CD8-positive, alpha-beta T cell (primary cell): ENCODE measurements at regions of chr19 and their contacts with region 1.

Region 1: DNA sequence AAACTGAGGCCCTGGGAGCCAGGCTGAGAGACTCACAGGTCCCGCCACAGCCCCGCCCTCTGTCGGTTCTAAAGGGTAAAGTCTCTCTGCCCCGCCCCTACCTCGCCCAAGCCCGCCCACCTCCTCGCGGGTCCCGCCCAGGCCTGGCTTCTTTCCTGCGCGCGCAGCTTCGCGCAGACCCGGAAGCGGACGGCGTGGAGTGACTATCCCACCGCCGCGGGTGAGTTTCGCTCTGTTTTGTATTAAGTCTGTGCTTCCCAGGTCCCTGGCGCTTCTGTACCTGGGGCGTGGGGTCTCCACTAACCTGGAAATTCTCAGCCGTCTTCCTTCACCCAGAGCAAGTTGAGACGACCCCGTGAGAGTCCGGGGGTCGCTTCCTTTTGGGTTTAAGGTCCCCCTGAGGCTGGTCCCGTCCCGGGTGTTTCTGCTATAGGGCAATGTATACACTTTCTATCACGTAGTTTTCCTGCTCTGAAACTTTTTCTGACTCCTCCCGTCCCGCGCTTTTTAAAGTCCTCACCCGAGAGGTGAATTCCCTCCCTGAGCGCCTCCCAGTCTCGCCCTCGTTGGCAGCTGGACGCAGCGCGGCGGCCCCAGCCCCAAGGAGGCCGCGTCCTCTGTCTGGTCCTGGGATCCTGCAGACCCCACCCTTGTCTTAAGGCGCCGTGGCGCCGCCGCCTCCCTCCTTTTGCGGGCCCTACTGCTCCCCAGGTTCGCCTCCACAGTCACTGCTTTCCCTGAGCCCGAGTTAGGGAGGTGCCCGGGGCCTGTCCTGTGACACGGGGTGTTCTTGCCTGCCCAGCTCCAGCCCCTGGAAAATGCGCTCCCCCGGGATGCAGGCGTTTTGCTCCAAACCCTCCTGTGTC is at the start of gene ZNF765:
- DNase-seq: peak; percentile 94 to 99 (median 97)
- ATAC-seq: peak; percentile 99
- H3K4me3 ChIP-seq: peak within 1 kb of the TSS; percentile 86 to 97
- H3K4me3 Mint-ChIP-seq: peak within 1 kb of the TSS; percentile 96
- H3K27ac ChIP-seq: peak within 1 kb of the TSS; percentile 78 to 84
- H3K27ac Mint-ChIP-seq: peak within 1 kb of the TSS; percentile 96
- H3K4me1 ChIP-seq: peaks cover 12% of the 10 kb centered on the region
- H3K4me1 Mint-ChIP-seq: peaks cover 36% of the 10 kb centered on the region
- H3K27me3 ChIP-seq: no peaks in the 10 kb centered on the region
- H3K27me3 Mint-ChIP-seq: no peaks in the 10 kb centered on the region
- CTCF ChIP-seq: peak; percentile 53
- total RNA-seq, gene ZNF765: 9.6 to 12.4 TPM

Region 2: GRCh38 chr19:52095172-52096014 is 1299.8 kb before region 1 on chr19 and contains the start of gene ZNF841:
- CTCF ChIA-PET with region 1: no interaction called
- POLR2A ChIA-PET with region 1: no interaction called
- intact Hi-C with region 1: loop called in 1 of 2 experiments (anchors 10 kb)
- DNase-seq: peak; percentile 70 to 89 (median 83)
- ATAC-seq: peak; percentile 97
- H3K4me3 ChIP-seq: peak within 1 kb of the TSS; percentile 96 to 99
- H3K4me3 Mint-ChIP-seq: peak within 1 kb of the TSS; percentile 97
- H3K27ac ChIP-seq: peak within 1 kb of the TSS; percentile 86 to 87
- H3K27ac Mint-ChIP-seq: peak within 1 kb of the TSS; percentile 93
- H3K4me1 ChIP-seq: peaks cover 16% of the 10 kb centered on the region
- H3K4me1 Mint-ChIP-seq: peaks cover 41% of the 10 kb centered on the region
- H3K27me3 ChIP-seq: no peaks in the 10 kb centered on the region
- H3K27me3 Mint-ChIP-seq: no peaks in the 10 kb centered on the region
- CTCF ChIP-seq: no peak
- total RNA-seq, gene ZNF841: 18.9 to 19.9 TPM

Region 3: DNA sequence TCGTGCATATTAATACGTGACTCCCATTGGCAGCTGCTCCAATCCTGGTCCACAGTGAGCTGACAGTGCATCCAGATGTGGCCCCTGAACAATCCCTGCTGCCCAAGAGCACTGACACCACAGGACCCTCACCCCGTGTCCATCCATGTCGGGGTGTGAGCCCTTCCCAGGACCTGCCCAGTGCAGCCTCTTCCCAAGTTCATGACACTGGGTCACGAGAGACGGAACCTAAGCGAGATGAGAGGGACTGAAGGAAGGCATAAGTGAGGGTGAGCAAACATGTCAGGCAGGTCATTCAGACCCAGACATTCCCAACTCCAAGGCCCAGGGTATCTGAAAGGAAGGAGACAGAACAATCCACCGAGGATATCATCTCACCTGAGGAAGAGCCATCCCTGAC is 541.3 kb before region 1 on chr19:
- CTCF ChIA-PET with region 1: no interaction called
- POLR2A ChIA-PET with region 1: no interaction called
- intact Hi-C with region 1: loop called in 1 of 2 experiments (anchors 5 kb)
- DNase-seq: no peak
- ATAC-seq: no peak
- H3K4me3 ChIP-seq: no peak overlapping the region
- H3K4me3 Mint-ChIP-seq: no peak overlapping the region
- H3K27ac ChIP-seq: no peak overlapping the region
- H3K27ac Mint-ChIP-seq: no peak overlapping the region
- H3K4me1 ChIP-seq: peaks cover 5% of the 10 kb centered on the region
- H3K4me1 Mint-ChIP-seq: peaks cover 29% of the 10 kb centered on the region
- H3K27me3 ChIP-seq: no peaks in the 10 kb centered on the region
- H3K27me3 Mint-ChIP-seq: no peaks in the 10 kb centered on the region
- CTCF ChIP-seq: no peak

Region 4: DNA sequence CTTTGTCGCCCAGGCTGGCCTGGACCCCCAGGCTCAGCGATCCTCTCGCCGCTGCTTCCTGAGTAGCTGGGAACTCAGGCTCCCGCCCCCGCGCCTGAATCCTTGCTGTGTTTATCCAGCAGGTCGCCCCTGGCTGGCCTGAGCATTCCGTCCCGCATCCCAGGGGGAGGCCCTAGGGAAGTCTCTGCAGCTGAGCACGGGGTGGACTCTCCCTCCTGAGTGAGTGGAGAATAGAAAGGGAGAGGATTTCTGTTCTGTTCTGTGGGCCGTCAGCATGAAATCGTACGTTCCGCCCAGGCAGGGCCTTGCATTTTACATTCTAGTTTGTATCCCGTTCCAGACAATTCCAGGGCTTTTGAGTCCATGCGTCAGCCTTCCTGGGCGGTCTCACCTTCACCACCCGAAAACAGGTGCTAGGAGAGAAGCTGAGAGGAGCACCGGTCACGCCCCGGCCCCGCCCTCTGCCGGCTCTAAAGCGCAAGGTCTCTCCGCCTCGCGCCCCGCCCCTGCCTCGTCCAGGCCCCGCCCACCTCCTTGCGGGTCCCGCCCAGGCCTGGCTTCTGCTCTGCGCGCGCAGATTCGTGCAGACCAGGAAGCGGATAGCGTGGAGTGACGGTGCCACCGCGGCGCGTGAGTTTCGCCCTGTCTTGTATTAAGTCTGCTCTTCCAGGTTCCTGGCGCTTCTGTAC is 36.3 kb after region 1 on chr19 and contains the start of gene ZNF761:
- CTCF ChIA-PET with region 1: no interaction called
- POLR2A ChIA-PET with region 1: no interaction called
- intact Hi-C with region 1: loop called (anchors 1 to 2 kb)
- DNase-seq: peak; percentile 95 to 100 (median 97)
- ATAC-seq: peak; percentile 99
- H3K4me3 ChIP-seq: peak within 1 kb of the TSS; percentile 71 to 85
- H3K4me3 Mint-ChIP-seq: peak within 1 kb of the TSS; percentile 98
- H3K27ac ChIP-seq: peak within 1 kb of the TSS; percentile 79 to 84
- H3K27ac Mint-ChIP-seq: peak within 1 kb of the TSS; percentile 97
- H3K4me1 ChIP-seq: peaks cover 11% of the 10 kb centered on the region
- H3K4me1 Mint-ChIP-seq: peaks cover 41% of the 10 kb centered on the region
- H3K27me3 ChIP-seq: no peaks in the 10 kb centered on the region
- H3K27me3 Mint-ChIP-seq: no peaks in the 10 kb centered on the region
- CTCF ChIP-seq: peak; percentile 47
- total RNA-seq, gene ZNF761: 8.4 to 9.2 TPM

Region 5: GRCh38 chr19:53467485-53468262 is 72.5 kb after region 1 on chr19 and contains the start of gene ZNF813:
- CTCF ChIA-PET with region 1: no interaction called
- POLR2A ChIA-PET with region 1: no interaction called
- intact Hi-C with region 1: loop called (anchors 1 kb)
- DNase-seq: peak; percentile 93 to 98 (median 95)
- ATAC-seq: peak; percentile 98
- H3K4me3 ChIP-seq: peak within 1 kb of the TSS; percentile 73 to 91
- H3K4me3 Mint-ChIP-seq: peak within 1 kb of the TSS; percentile 92
- H3K27ac ChIP-seq: peak within 1 kb of the TSS; percentile 64 to 79
- H3K27ac Mint-ChIP-seq: peak within 1 kb of the TSS; percentile 89
- H3K4me1 ChIP-seq: peaks cover 7% of the 10 kb centered on the region
- H3K4me1 Mint-ChIP-seq: peaks cover 26% of the 10 kb centered on the region
- H3K27me3 ChIP-seq: no peaks in the 10 kb centered on the region
- H3K27me3 Mint-ChIP-seq: peaks cover 18% of the 10 kb centered on the region
- CTCF ChIP-seq: no peak
- total RNA-seq, gene ZNF813: 3.8 TPM

Region 6: GRCh38 chr19:53642381-53643081 is 247.3 kb after region 1 on chr19:
- CTCF ChIA-PET with region 1: no interaction called
- POLR2A ChIA-PET with region 1: no interaction called
- intact Hi-C with region 1: no loop called
- DNase-seq: no peak
- ATAC-seq: no peak
- H3K4me3 ChIP-seq: no peak overlapping the region
- H3K4me3 Mint-ChIP-seq: no peak overlapping the region
- H3K27ac ChIP-seq: no peak overlapping the region
- H3K27ac Mint-ChIP-seq: no peak overlapping the region
- H3K4me1 ChIP-seq: no peaks in the 10 kb centered on the region
- H3K4me1 Mint-ChIP-seq: no peaks in the 10 kb centered on the region
- H3K27me3 ChIP-seq: no peaks in the 10 kb centered on the region
- H3K27me3 Mint-ChIP-seq: no peaks in the 10 kb centered on the region
- CTCF ChIP-seq: no peak